GM13976 (cell line): ENCODE measurements at regions of chr6 and their contacts with region 1.

Region 1: DNA sequence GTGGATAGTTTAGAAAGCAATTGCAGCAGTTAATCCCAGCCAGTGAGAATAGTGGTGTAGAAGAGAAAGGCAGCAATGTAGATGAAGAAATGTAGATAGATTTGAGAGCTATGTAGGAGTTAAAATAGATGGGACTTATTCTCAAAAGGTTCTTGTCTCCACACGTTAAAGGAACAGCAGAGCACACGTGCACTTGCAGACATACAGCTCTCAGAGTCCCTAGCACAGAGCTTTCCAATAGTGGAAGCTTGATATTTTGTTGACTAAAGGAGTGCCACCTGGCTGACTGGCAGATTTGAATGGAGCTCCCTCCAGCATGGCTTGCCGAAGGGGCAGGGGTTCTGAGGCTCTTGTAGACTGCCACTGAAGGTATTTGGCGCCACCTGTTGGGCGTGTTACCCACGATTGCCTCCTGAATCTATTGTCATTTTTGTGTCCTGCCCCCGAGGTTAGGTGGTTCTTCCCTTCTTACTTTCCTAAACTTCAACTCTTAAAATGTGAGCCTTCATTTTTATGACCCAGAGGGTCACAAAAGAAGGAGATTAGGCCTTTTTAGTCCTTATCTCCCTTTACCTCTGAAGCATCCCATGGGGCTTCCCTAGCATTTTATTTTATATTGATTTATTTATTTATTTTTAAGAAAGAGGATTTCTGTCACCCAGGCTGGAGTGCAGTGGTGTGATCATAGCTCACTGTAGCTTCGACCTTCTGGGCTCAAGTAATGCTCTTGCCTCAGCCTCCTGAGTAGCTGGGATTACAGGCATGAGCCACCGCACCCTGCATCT is 16.4 kb downstream of the BRD2 start:
- DNase-seq: peak; percentile 74
- CTCF ChIP-seq: peak; percentile 84

Region 2: DNA sequence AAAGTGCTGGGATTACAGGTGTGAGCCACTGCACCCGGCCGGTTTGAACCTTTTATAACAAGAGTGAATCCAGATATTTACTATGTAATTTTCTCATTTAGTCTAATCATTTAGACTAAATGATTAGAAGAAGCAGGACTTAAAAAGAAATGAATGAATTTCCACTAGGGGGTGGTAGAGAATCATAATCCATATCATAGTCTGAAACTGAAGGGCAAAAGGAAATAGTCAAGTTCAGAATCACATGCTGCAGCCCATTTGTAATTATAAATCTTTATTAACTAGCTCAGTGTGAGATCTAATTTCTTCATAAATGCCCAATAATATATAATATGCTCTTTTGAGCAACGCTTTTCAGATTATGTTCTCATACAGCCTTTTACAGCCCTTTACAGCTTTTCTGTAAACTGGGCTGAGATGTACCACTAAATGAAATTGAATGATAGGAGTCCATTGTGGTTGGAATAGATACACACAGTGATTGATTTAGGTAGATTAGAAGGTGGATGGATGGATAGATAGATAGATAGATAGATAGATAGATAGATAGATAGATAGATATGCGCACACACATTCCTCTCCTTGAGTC is 99.0 kb before region 1 on chr6:
- in situ Hi-C with region 1: loop called (anchors 5 kb)
- DNase-seq: peak; percentile 67
- CTCF ChIP-seq: peak; percentile 47